Activated B cell treated with CpG ODN at 0.5 μM for 24 hours (primary cell): ENCODE measurements at regions of chr1 and their contacts with region 1.

Region 1: GRCh38 chr1:157773493-157774350 is 3.2 kb downstream of the FCRL2 start:
- DNase-seq: no peak
- ATAC-seq: peak; percentile 80
- H3K4me3 Mint-ChIP-seq: peak overlapping the region; percentile 79
- H3K27ac Mint-ChIP-seq: peak overlapping the region; percentile 87
- H3K4me1 Mint-ChIP-seq: peaks cover 97% of the 10 kb centered on the region
- H3K27me3 Mint-ChIP-seq: no peaks in the 10 kb centered on the region
- CTCF ChIP-seq: peak; percentile 34

Region 2: DNA sequence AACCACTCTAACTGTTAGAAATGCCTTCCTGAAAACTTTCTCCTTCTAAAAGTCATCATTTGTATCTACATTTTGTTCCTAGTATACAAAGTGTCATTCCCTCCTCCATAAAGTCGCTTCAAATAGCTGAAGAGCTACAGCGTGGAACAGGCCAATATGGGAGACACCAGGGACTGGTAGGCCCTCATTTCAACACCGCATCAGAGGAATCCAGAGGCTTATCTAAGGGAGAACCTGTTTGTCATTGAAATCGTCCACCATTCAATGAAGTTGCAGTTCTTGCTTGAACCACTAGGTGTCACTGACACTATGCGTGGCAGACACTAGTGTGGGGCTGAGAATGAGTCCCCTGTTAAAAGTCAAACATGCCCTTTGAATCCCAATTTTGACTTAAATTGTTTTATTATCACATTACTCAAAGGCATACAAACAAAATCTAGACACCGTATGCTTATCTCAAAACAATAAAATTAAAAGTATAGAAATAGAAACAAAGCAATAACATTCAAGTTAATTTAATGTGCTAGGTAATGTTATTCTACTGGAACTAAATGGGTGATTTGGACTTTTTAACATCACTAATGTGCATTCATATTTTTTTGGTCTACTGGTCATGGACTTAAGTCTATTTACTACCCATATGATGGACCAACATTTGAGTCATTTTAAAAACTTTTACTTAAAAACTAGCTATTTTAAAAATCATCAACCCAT is 403.8 kb before region 1 on chr1:
- CTCF ChIA-PET with region 1: no interaction called
- POLR2A ChIA-PET with region 1: no interaction called
- intact Hi-C with region 1: loop called (anchors 5 kb)
- DNase-seq: no peak
- ATAC-seq: peak; percentile 77
- H3K4me3 Mint-ChIP-seq: no peak overlapping the region
- H3K27ac Mint-ChIP-seq: no peak overlapping the region
- H3K4me1 Mint-ChIP-seq: no peaks in the 10 kb centered on the region
- H3K27me3 Mint-ChIP-seq: no peaks in the 10 kb centered on the region
- CTCF ChIP-seq: peak; percentile 96

Region 3: GRCh38 chr1:157431751-157432150 is 342.0 kb before region 1 on chr1:
- CTCF ChIA-PET with region 1: no interaction called
- POLR2A ChIA-PET with region 1: no interaction called
- intact Hi-C with region 1: no loop called
- DNase-seq: no peak
- ATAC-seq: no peak
- H3K4me3 Mint-ChIP-seq: no peak overlapping the region
- H3K27ac Mint-ChIP-seq: no peak overlapping the region
- H3K4me1 Mint-ChIP-seq: no peaks in the 10 kb centered on the region
- H3K27me3 Mint-ChIP-seq: peaks cover 13% of the 10 kb centered on the region
- CTCF ChIP-seq: no peak

Region 4: DNA sequence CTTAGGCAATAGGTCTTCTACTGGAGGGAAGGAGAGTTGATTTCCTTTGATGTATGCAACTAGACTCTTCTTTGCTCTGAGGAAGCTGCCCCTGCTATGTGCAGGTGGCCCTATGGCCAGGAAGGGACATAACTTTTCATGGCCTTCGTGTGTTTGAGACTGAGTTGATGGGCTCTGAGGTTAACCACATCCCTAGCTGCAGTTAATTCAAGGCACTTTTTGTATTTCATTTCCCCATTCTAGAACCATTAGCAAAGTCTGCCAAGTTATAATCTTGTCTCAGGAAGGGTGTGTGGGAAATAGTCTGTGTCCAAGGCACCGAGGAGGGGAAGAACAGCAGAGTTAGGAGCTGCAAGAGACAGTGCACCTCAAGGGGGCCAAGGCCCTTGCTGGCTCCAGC is 178.4 kb before region 1 on chr1:
- CTCF ChIA-PET with region 1: interaction called, 13 read pairs
- POLR2A ChIA-PET with region 1: interaction called, 3 read pairs
- intact Hi-C with region 1: loop called (anchors 5 kb)
- DNase-seq: no peak
- ATAC-seq: peak; percentile 53
- H3K4me3 Mint-ChIP-seq: peak overlapping the region; percentile 62
- H3K27ac Mint-ChIP-seq: peak overlapping the region; percentile 30
- H3K4me1 Mint-ChIP-seq: peaks cover 71% of the 10 kb centered on the region
- H3K27me3 Mint-ChIP-seq: no peaks in the 10 kb centered on the region
- CTCF ChIP-seq: no peak

Region 5: GRCh38 chr1:157691285-157691920 is 82.3 kb before region 1 on chr1:
- CTCF ChIA-PET with region 1: interaction called, 35 read pairs
- POLR2A ChIA-PET with region 1: interaction called, 6 read pairs
- intact Hi-C with region 1: loop called (anchors 1 kb)
- DNase-seq: no peak
- ATAC-seq: peak; percentile 62
- H3K4me3 Mint-ChIP-seq: no peak overlapping the region
- H3K27ac Mint-ChIP-seq: peak overlapping the region; percentile 69
- H3K4me1 Mint-ChIP-seq: peaks cover 86% of the 10 kb centered on the region
- H3K27me3 Mint-ChIP-seq: no peaks in the 10 kb centered on the region
- CTCF ChIP-seq: no peak

Region 6: DNA sequence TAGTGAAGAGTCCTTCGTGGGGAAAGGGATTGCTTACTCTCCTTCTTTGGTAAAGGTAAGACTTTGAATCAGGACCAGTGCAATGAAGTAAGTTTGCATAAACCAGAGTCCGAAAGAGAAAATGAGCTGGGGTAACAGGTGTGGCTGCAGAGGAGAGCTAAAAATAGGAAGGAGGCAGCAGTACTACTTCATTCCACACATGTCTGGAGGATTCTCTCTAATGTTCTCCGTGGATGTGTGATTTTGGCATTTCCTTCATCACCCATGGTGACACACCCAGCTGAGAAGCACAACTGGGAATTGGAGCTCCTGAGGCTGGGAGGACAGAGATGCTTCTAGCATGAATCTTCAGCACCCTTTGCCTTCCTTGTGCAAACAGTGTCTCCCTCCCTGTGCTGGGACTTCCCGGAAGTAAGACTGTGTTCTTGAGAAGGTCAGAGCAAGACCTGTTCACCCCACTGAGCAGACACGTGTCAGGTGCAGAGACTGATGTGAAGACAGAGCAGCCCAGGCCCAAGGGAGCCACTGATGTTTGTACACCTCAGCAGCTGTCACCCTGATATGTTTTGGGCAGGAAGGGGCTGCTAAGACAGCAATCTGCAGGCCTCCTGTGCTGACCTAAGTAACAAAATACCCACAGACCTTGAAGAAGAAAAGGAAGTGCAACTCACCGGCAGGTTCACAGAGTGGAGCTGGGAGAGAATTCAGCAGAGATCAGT is 32.9 kb after region 1 on chr1:
- CTCF ChIA-PET with region 1: interaction called, 6 read pairs
- POLR2A ChIA-PET with region 1: interaction called, 42 read pairs
- intact Hi-C with region 1: loop called (anchors 5 kb)
- DNase-seq: peak; percentile 60
- ATAC-seq: peak; percentile 91
- H3K4me3 Mint-ChIP-seq: peak overlapping the region; percentile 61
- H3K27ac Mint-ChIP-seq: peak overlapping the region; percentile 88
- H3K4me1 Mint-ChIP-seq: peaks cover 98% of the 10 kb centered on the region
- H3K27me3 Mint-ChIP-seq: no peaks in the 10 kb centered on the region
- CTCF ChIP-seq: no peak

Region 7: DNA sequence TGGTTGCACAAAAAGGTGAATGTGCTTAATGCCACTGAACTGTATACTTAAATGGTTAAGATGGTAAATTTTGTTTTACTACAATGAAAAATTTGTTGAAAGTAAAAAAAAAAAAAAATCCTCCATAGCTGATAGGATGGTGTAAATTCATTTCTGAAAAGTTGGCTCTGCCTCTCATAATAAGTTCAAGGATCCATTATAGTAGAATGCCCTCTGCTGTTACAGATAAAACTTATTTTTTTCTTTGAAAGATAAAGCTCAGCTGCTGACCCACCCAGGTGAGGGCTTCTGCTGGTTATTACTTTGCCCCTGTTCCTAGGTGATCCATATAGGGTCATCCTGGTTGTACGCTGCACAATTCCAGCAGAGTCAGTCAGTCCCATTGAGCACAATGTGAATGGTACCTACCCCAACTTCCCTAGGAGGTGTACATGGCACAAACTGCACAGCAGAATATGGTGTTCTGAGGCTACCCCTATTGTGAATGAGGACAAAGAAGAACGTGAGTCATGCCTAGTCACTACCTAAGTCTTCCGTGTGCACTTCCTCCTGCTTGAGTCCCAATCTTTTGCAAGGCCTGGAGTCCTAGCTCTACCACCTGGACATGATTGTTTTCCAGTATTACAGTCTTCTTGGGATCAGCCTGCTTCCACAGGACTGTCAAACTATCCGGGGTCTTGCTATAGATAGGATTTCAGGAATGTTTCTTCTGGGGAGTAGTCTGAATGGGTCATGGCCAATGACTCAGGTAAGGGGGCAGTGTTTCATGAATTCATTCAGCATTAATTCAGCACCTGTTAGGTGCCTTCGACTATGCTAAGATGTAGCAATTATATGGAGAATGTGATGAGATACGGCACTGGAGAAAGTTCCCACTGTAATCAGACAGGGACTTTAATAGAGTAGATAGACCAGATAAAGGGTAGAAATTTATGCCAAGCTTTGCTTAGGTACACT is 88.7 kb after region 1 on chr1:
- CTCF ChIA-PET with region 1: interaction called, 12 read pairs
- POLR2A ChIA-PET with region 1: interaction called, 3 read pairs
- intact Hi-C with region 1: loop called (anchors 1 kb)
- DNase-seq: no peak
- ATAC-seq: peak; percentile 47
- H3K4me3 Mint-ChIP-seq: no peak overlapping the region
- H3K27ac Mint-ChIP-seq: peak overlapping the region; percentile 31
- H3K4me1 Mint-ChIP-seq: peaks cover 18% of the 10 kb centered on the region
- H3K27me3 Mint-ChIP-seq: no peaks in the 10 kb centered on the region
- CTCF ChIP-seq: no peak

Region 8: DNA sequence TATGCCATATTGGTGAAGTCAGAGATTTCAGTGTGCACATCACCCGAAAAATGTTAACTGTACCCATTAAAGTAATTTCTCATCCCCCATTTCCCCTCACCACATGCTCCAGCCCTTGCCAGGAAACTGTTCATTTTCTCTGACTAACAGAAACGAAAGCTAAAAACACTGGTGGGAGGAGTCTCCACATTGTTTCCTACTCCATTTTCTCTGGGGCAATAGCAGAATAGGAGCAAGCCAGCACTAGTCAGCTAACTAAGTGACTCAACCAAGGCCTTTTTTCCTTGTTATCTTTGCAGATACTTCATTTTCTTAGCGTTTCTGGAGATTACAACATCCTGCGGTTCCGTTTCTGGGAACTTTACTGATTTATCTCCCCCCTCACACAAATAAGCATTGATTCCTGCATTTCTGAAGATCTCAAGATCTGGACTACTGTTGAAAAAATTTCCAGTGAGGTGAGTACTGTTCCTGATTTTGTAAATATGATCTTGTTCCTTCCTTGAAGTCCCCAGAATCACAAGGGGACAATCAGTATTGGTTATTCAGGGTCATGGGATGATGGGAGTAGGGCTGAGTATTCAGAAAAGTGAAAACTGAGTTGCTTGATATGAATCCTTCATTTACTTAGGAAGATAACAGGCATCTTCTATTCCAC is 1236.1 kb after region 1 on chr1 and contains the start of gene IFI16:
- CTCF ChIA-PET with region 1: no interaction called
- POLR2A ChIA-PET with region 1: no interaction called
- intact Hi-C with region 1: no loop called
- DNase-seq: no peak
- ATAC-seq: peak; percentile 61
- H3K4me3 Mint-ChIP-seq: peak within 1 kb of the TSS; percentile 91
- H3K27ac Mint-ChIP-seq: peak within 1 kb of the TSS; percentile 93
- H3K4me1 Mint-ChIP-seq: peaks cover 72% of the 10 kb centered on the region
- H3K27me3 Mint-ChIP-seq: no peaks in the 10 kb centered on the region
- CTCF ChIP-seq: no peak
- total RNA-seq, gene IFI16: 145 and 160 TPM in 2 replicates